K562 (cell line): ENCODE measurements at regions of chr7 and their contacts with region 1.

Region 1: DNA sequence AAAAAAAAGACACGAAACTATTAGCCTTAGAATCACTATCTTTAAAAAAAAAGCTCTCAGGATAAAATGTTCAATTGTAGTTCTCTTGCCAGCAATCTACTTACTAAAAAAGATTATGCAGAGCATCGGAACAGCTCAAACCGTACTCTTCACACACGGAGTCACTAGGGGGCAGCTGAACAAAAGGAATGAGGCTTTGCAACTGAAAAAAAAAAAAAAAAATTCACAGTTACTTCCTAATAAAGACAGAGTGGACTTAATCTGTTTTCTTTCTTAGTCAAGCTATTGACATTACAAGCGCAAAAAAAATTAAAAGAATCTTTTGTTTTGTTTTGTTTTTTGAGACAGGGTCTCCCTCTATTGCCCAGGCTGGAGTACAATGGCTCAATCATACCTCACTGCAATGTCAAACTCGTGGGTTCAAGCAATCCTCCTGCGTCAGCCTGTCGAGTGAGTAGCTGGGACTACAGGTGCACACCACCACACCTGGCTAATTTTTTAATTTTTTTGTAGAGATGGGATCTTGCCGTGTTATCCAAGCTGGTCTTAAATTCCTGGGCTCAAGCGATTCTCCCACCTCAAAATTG is 11.5 kb downstream of the PMS2 start:
- DNase-seq: peak; percentile 30 to 71 (median 44)
- ATAC-seq: peak; percentile 91
- H3K4me3 ChIP-seq: no peak overlapping the region
- H3K27ac ChIP-seq: no peak overlapping the region
- H3K4me1 ChIP-seq: no peaks in the 10 kb centered on the region; a peak in 1 of 5 replicates
- H3K27me3 ChIP-seq: no peaks in the 10 kb centered on the region
- CTCF ChIP-seq: peak; percentile 56 to 85 (median 69)
- EP300 ChIP-seq: no peak
- POLR2A ChIP-seq: no peak
- RAD21 ChIP-seq: peak; percentile 78 to 90

Region 2: DNA sequence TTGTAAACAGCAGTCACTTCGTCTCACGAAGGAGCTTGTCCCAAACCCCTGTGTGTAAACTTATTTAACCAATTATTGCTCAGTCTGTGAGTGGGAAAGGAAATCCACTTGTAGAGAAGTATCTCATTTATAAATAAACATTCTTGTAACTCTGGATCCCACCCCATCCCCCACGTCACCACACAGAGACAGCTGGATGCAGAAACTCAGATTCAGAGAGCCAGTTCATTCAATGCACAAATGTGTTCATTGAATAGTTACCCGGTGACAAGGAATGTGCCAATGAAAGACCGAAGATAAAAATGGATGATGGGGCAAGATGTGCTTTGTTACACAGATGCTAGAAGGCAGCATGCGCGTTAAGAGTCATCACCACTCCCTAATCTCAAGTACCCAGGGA is 125.0 kb before region 1 on chr7:
- CTCF ChIA-PET with region 1: no interaction called
- POLR2A ChIA-PET with region 1: no interaction called
- in situ Hi-C with region 1: loop called (anchors 25 kb)
- intact Hi-C with region 1: no loop called
- DNase-seq: no peak
- ATAC-seq: no peak
- H3K4me3 ChIP-seq: no peak overlapping the region
- H3K27ac ChIP-seq: no peak overlapping the region
- H3K4me1 ChIP-seq: no peaks in the 10 kb centered on the region; a peak in 1 of 5 replicates
- H3K27me3 ChIP-seq: peaks cover 2 to 16% of the 10 kb centered on the region in 2 experiments; a peak in 2 of 5 replicates
- CTCF ChIP-seq: no peak
- EP300 ChIP-seq: no peak
- POLR2A ChIP-seq: no peak
- RAD21 ChIP-seq: no peak

Region 3: DNA sequence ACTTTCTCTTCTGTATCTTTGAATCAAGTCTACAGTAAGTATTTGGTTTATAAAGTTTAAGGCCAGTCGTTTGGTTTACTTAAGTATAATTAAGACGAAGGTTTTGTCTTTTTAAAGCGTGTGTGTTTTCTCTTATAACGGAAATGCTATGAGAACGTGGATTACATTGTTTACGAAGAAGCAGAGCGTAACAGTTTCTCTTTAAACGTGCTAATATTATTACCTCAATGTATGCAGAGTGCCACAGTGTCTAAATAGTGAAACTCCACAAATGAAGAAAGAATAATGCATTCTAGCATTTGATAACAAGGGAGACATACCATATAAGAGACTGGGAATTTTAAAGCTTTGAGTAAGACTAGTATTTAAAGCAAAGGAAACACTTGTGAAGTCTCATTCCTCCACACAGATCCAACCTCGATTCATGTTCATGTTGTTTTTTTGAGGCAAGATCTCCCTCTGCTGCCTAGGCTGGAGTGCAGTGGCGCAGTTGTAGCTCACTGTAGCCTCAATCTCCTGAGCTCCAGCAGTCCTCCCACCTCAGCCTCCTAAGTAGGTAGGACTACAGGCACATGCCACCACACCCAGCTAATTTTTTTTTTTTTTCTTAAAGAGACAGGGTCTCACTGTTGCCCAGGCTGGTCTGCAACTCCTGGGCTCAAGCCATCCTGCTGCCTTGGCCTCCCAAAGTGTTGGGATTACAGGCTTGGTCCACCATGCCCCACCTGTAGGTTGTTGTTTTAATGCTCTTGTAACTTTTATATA is 109.0 kb after region 1 on chr7:
- CTCF ChIA-PET with region 1: no interaction called
- POLR2A ChIA-PET with region 1: no interaction called
- in situ Hi-C with region 1: no loop called
- intact Hi-C with region 1: loop called (anchors 1 kb)
- DNase-seq: peak in 1 of 4 experiments; percentile 76
- ATAC-seq: peak; percentile 55
- H3K4me3 ChIP-seq: peak overlapping the region; percentile 61
- H3K27ac ChIP-seq: peak overlapping the region; percentile 47; the same call in 2 of the 3 replicates
- H3K4me1 ChIP-seq: peaks cover 8 to 13% of the 10 kb centered on the region in 2 experiments; a peak in 4 of 5 replicates
- H3K27me3 ChIP-seq: no peaks in the 10 kb centered on the region
- CTCF ChIP-seq: peak; percentile 52 to 66 (median 62)
- EP300 ChIP-seq: no peak
- POLR2A ChIP-seq: no peak
- RAD21 ChIP-seq: peak; percentile 71 to 77

Region 4: DNA sequence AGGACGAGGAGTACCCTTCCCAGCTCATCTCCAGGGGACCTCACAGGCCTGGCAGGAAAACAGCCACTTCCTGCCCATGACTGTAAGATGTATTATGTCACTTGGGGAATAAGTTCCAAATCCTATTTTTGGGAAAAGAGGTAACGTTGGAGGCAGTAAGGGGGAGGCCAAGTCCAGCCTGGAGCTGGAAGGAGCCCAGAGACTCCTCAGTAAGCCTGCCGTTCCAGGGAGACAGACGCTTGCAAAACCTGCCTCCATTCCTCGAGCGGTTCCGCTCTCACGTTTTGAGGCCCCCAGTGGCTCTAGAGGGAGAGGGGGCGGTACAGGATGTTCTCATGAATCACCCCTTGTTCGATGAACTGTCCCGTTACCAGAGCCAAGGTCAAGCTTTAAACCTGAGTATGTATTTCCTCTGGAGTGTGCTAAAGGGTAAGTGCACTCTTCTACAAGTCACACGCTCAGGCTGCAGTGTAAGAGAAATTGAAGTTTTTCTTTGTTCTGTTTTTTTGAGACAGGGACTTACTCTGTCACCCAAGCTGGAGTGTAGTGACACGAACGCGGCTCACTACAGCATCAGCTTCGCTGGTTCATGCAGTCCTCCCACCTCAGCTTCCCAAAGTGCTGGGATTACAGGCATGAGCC is 320.6 kb after region 1 on chr7:
- CTCF ChIA-PET with region 1: interaction called, 13 read pairs
- POLR2A ChIA-PET with region 1: no interaction called
- in situ Hi-C with region 1: loop called (anchors 5 kb)
- intact Hi-C with region 1: loop called (anchors 2 kb)
- DNase-seq: peak in 1 of 4 experiments; percentile 33
- ATAC-seq: peak; percentile 57
- H3K4me3 ChIP-seq: no peak overlapping the region
- H3K27ac ChIP-seq: no peak overlapping the region
- H3K4me1 ChIP-seq: peaks cover 0 to 3% of the 10 kb centered on the region in 2 experiments; a peak in 1 of 5 replicates
- H3K27me3 ChIP-seq: no peaks in the 10 kb centered on the region
- CTCF ChIP-seq: no peak
- EP300 ChIP-seq: no peak
- POLR2A ChIP-seq: no peak
- RAD21 ChIP-seq: no peak

Region 5: GRCh38 chr7:6323967-6324701 is 326.8 kb after region 1 on chr7:
- CTCF ChIA-PET with region 1: interaction called, 13 read pairs
- POLR2A ChIA-PET with region 1: no interaction called
- in situ Hi-C with region 1: loop called (anchors 5 kb)
- intact Hi-C with region 1: loop called (anchors 2 kb)
- DNase-seq: no peak
- ATAC-seq: no peak
- H3K4me3 ChIP-seq: no peak overlapping the region
- H3K27ac ChIP-seq: no peak overlapping the region
- H3K4me1 ChIP-seq: no peaks in the 10 kb centered on the region; a peak in 1 of 5 replicates
- H3K27me3 ChIP-seq: no peaks in the 10 kb centered on the region
- CTCF ChIP-seq: no peak
- EP300 ChIP-seq: no peak
- POLR2A ChIP-seq: no peak
- RAD21 ChIP-seq: no peak

Region 6: GRCh38 chr7:6435486-6436384 is 438.4 kb after region 1 on chr7:
- CTCF ChIA-PET with region 1: interaction called, 13 read pairs
- POLR2A ChIA-PET with region 1: no interaction called
- in situ Hi-C with region 1: no loop called
- intact Hi-C with region 1: loop called (anchors 10 kb)
- DNase-seq: peak; percentile 83 to 93 (median 86)
- ATAC-seq: peak; percentile 99
- H3K4me3 ChIP-seq: no peak overlapping the region
- H3K27ac ChIP-seq: no peak overlapping the region
- H3K4me1 ChIP-seq: peaks cover 3 to 5% of the 10 kb centered on the region in 2 experiments; a peak in 2 of 5 replicates
- H3K27me3 ChIP-seq: no peaks in the 10 kb centered on the region
- CTCF ChIP-seq: peak; percentile 89 to 96 (median 96)
- EP300 ChIP-seq: no peak
- POLR2A ChIP-seq: no peak
- RAD21 ChIP-seq: peak; percentile 87 to 88